Activated naive CD4-positive, alpha-beta T cell treated with anti-CD3 and anti-CD28 coated beads, Interleukin-2, amount 10 ng/mL, durations not matched to agents 7 days and 5 days (primary cell): ENCODE measurements at regions of chr15 and their contacts with region 1.

Region 1: GRCh38 chr15:90086868-90087268 is 15.4 kb downstream of the IDH2 start:
- DNase-seq: peak; percentile 74
- H3K4me3 Mint-ChIP-seq: no peak overlapping the region
- H3K27ac Mint-ChIP-seq: no peak overlapping the region
- H3K4me1 Mint-ChIP-seq: peaks cover 14% of the 10 kb centered on the region
- H3K27me3 Mint-ChIP-seq: no peaks in the 10 kb centered on the region

Region 2: GRCh38 chr15:89899295-89899945 is 187.4 kb before region 1 on chr15:
- CTCF ChIA-PET with region 1: interaction called, 11 read pairs
- DNase-seq: no peak
- H3K4me3 Mint-ChIP-seq: no peak overlapping the region
- H3K27ac Mint-ChIP-seq: no peak overlapping the region
- H3K4me1 Mint-ChIP-seq: peaks cover 8% of the 10 kb centered on the region
- H3K27me3 Mint-ChIP-seq: peaks cover 35% of the 10 kb centered on the region

Region 3: DNA sequence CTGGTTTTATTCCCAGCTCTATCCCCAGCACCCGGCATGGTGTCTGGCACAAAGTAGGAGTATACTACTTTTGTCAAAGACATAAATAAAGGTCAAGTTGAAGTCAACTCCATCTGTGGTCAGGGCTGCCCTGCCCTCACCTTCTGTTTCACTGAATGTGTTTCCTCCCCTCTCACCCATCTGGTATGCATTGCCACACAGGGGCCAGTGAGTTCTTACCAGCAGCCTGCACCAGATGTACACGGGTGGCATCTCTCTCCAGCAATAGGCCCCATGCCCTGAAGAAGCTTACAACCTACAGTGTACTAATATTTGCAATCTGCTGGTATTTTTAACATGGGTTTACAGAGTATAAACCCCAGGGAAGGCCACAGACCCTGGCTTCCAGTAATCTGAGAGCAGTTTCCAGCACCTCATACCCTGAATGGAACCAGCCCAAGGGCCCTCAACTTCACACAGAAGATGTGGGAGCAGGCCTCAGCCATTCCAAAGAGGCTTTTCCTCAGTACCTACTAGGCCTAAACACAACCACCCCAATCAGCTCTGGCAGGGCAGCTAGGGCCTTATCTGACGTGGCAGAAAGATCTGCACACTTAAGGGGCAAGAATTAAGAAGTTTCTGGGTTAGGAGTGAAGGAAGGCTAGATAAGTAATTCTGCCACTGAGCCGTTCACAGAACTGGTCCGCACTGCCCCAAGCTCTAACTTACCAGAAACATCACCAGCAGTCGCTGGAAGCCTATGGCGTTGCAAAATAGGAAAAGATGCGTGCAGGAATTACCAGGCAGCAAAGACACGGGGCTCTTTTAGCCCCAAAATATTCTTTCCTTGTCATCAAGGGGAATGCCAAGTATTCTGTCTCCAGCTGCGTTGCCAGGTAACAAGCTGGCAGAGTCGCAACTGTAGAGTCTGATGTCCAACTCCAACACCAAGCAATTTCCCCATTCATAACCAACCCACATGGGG is 13.3 kb after region 1 on chr15:
- CTCF ChIA-PET with region 1: interaction called, 13 read pairs
- DNase-seq: no peak
- H3K4me3 Mint-ChIP-seq: peak overlapping the region; percentile 78
- H3K27ac Mint-ChIP-seq: peak overlapping the region; percentile 97
- H3K4me1 Mint-ChIP-seq: peaks cover 73% of the 10 kb centered on the region
- H3K27me3 Mint-ChIP-seq: peaks cover 24% of the 10 kb centered on the region

Region 4: GRCh38 chr15:90512981-90513380 is 426.1 kb after region 1 on chr15:
- CTCF ChIA-PET with region 1: no interaction called
- DNase-seq: no peak
- H3K4me3 Mint-ChIP-seq: no peak overlapping the region
- H3K27ac Mint-ChIP-seq: no peak overlapping the region
- H3K4me1 Mint-ChIP-seq: peaks cover 14% of the 10 kb centered on the region
- H3K27me3 Mint-ChIP-seq: peaks cover 3% of the 10 kb centered on the region